A673 (cell line): ENCODE measurements at regions of chr3 and their contacts with region 1.

Region 1: GRCh38 chr3:17227472-17227871 is 342.7 kb downstream of the PLCL2 start:
- DNase-seq: no peak
- H3K4me3 ChIP-seq: no peak overlapping the region
- H3K27ac ChIP-seq: no peak overlapping the region
- H3K4me1 ChIP-seq: no peaks in the 10 kb centered on the region
- H3K27me3 ChIP-seq: no peaks in the 10 kb centered on the region
- CTCF ChIP-seq: no peak

Region 2: GRCh38 chr3:16978234-16978920 is 249.1 kb before region 1 on chr3:
- CTCF ChIA-PET with region 1: no interaction called
- POLR2A ChIA-PET with region 1: no interaction called
- intact Hi-C with region 1: no loop called
- DNase-seq: no peak
- H3K4me3 ChIP-seq: no peak overlapping the region
- H3K27ac ChIP-seq: no peak overlapping the region
- H3K4me1 ChIP-seq: no peaks in the 10 kb centered on the region
- H3K27me3 ChIP-seq: no peaks in the 10 kb centered on the region
- CTCF ChIP-seq: no peak

Region 3: DNA sequence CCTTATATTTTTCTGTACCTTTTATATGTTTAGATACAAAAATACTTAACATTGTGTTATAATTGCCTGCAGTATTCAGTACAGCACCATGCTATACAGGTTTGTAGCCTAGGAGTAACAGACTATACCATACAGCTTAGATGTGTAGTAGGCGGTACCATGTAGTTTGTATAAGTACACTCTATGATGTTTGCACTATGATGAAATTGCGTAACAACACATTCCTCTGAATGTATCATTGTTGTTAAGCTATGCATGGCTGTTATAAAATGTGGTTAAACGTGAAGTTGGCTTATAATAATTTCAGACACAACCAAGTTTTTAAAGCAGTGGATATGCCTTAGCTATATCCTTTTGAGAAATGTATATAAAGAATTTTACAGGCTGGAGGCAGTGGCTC is 14.4 kb before region 1 on chr3:
- CTCF ChIA-PET with region 1: interaction called, 14 read pairs
- POLR2A ChIA-PET with region 1: interaction called, 3 read pairs
- intact Hi-C with region 1: no loop called
- DNase-seq: no peak
- H3K4me3 ChIP-seq: no peak overlapping the region
- H3K27ac ChIP-seq: no peak overlapping the region
- H3K4me1 ChIP-seq: no peaks in the 10 kb centered on the region
- H3K27me3 ChIP-seq: no peaks in the 10 kb centered on the region
- CTCF ChIP-seq: no peak